ENCODE measurements at regions of chr21 and their contacts with region 1.

Region 1: DNA sequence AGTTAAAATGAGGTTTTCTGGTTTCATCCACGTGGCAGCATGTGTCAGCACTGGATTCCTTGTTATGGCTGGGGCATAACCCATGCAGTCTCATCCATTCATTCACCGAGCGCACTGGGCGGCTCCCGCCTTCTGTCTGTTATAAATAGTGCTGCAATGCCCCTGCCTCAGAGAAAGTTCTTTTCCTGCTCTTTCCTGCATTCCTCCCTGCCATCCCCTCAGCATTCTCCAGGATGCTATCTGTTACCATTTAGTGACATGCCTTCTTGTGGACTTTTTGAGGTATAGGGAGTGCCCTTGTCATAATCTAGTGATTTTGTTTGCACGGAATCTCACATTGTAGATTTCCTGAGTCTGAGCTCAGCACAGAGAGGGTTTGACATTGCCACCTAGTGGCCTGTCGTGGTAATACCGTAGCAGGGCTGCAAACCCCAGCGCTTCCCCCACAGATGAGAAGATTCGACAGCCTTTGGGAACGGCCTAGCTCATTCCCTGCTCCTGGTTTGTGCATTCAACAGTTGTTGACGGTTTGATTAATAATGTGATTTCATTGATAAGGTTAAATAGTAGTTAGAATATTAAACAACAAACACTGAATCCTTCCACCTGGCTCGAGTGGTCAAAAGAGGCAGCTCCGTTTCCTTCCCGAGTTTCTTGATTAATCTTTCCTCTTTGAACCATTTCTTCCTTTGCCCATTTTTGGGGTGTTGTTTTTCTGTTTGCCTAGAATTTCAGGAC is 46.3 kb downstream of the UMODL1 start:
- DNase-seq: peak in 1 of 2 donors; percentile 89
- ATAC-seq: peak; percentile 78

Region 2: DNA sequence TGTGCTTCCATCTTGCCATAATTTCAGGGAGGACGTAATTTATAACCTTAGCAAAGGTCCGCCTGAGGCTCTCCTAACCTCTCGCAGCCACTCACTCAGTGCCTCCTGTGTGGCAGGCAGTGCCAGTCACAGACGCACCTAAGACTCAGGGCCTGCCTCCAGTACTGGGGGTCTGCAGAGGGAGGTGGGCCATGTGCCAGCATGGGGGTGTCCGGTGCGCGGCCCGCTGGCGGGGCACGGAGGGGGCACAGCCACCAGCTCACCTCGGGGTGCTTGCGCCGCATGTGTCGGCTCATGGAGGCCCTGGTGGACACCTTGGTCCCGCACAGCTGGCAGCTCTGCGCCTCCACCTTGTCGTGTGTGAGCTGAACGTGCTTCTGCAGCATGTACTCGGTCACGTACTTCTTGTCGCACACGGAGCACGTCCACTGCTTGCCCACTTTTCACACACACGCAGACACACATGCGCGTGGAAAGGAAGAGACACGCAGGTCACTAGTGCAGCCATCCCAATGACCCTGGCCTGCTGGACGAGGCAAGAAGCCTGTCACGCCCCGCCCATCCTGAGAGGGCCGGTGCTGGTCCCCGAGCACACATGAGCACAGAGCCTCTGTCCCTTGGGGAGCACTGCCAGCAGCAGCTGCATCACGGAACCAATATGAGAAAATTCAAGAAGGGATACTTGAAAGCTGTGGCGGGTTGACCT is 307.4 kb before region 1 on chr21:
- intact Hi-C with region 1: loop called (anchors 5 kb)
- DNase-seq: no peak
- ATAC-seq: no peak

Region 3: DNA sequence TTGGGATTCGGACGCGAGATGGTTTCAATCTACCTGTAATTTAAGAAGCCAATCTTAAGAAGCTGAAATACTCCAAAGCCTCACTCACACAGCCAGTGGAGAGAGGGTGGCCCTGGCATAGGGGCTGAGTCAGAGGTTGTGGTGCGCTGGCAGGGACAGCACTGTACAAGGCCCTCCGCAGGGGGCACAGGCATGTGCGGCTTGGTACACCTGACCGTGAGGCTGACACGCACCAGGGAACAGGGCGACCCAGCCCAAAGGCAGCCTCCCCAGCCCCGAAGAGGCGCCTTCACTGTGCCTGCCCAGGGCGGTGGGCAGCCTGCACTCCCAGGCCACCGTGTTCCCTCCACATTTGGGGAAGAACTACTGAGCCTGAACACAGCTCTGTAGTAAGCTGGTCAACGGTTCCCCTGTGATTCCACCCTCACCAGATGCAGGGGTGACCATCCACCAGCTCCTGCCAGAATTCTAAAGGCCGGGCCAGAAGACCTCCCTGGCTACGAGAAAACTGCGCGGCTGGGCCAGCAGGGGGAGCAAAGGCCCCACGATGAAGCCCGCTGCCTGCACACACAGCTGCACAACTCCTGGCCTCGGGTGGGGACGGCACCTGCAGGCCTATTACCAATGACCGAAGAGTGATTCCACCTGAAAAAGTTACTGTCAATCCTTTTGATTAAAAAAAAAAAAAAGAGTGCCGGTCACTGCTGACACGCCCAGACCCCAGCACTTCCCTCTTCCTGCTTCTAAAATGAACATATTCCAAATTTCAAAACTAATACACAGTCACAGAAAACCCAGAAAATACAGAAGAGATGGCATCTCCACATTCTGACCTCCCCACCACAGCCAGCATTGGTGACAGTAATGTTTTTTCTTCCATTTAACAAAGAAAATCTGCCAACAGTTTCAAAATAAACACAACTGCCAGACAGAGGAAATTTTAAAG is 300.9 kb before region 1 on chr21:
- intact Hi-C with region 1: loop called (anchors 5 kb)
- DNase-seq: peak; percentile 62 to 67
- ATAC-seq: peak; percentile 92

Region 4: GRCh38 chr21:41926117-41926806 is 191.1 kb before region 1 on chr21:
- intact Hi-C with region 1: no loop called
- DNase-seq: peak in 1 of 2 donors; percentile 38
- ATAC-seq: peak; percentile 94

Region 5: DNA sequence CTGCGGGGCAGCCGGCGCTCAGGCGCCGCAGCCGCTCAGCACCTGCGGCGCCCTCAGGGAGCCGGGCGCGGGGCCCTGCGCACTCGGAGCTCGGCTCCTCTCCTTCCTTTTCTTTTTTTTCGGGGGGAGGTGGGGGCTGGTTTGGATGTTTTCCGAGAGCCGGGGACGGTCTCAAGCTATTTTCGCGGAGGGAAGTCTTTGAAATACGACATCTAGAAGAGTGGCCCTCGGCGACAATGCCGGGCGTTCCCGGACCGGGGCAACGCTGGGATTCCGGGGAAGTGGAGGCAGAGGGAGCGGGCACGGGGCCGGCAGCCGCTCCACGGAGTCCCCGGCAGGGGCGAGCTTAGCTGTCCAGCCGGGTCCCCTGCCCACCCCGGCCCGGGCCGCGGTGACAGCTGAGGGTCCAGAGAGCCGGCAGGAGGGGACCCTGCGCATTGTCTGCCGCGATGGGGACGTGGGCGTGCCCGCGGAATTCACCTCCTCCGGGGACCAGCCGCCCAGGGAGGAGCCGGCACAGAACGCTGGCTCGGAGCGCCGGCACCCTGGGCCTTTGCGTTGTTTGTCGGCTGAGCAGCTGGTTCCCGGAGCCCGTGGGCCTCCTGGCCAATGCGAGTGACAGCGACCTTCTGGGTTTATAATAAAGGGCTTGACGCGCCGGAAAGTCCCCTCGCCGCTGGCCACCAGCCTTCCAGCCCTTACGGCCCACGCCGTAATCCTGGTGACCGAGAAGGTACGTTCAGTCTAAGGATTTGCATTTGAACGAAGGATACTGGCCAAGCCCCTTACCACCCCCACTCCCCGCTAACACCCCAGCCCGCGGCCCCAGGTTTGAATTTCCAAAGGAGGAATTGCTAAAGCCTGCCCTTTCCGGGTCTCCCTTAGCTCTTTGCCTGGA is 396.8 kb after region 1 on chr21:
- intact Hi-C with region 1: no loop called
- DNase-seq: peak in 1 of 2 donors; percentile 82
- ATAC-seq: peak; percentile 78